ENCODE measurements at regions of chr12 and their contacts with region 1.

Region 1: DNA sequence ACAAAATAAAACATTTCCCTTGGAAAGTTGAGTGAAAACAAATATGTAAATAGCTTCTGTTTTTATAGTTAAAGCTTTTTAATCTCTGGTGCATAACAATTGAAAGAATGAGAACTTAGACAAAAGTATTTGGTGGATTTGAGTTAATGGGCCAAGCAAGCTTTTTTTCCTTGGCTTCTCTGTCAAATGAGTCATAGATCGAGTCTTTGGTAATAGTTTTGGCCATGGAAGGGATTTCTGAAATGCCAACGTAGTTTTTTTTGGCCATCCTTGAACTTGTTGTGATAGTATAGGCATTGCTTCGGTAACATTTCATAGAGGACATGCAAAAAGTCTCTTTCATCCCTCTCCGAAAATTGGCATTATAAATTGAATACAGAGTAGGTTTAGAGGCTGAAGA is 34.9 kb downstream of the GPR19 start:
- DNase-seq: peak; percentile 78
- H3K4me3 ChIP-seq: no peak overlapping the region
- CTCF ChIP-seq: no peak

Region 2: DNA sequence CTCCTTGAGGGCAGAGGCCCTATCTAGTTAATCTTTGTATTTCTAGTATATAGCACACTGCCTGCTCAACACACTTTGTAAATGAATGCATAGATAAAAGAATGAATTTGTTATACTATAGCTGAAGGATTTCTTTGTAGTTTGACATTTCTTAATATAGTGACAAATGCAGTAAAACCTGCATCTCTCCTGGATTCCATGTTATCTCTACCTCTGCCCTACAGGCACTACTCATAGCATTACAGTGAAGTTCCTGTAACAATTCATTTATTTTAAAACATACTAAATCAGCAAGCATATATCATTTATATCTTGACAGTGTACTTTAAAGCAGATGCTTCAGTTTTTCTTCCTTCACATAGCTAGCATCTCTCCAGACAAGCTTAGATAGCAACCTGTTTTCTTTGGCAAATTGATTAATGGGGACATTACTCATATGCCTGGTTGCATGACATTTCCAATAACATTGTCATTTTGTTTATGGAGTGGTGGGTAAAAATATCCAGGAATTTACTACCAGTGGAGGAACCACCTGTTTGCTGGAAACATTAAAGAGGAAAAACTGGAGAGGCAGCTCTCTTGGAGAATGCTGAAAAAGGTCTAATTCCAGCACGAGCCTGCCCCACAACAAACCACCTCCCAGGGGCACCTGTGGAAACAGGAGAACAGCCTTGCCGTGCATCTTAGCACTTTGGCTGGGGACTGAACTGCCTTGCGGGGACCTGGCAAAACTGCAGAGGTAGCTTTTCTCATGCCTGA is 61.4 kb before region 1 on chr12:
- in situ Hi-C with region 1: loop called (anchors 5 kb)
- DNase-seq: no peak
- H3K4me3 ChIP-seq: no peak overlapping the region
- CTCF ChIP-seq: no peak

Region 3: GRCh38 chr12:12704593-12705230 is 43.6 kb after region 1 on chr12:
- in situ Hi-C with region 1: loop called (anchors 5 kb)
- DNase-seq: peak; percentile 91
- H3K4me3 ChIP-seq: no peak overlapping the region
- CTCF ChIP-seq: peak; percentile 99

Region 4: DNA sequence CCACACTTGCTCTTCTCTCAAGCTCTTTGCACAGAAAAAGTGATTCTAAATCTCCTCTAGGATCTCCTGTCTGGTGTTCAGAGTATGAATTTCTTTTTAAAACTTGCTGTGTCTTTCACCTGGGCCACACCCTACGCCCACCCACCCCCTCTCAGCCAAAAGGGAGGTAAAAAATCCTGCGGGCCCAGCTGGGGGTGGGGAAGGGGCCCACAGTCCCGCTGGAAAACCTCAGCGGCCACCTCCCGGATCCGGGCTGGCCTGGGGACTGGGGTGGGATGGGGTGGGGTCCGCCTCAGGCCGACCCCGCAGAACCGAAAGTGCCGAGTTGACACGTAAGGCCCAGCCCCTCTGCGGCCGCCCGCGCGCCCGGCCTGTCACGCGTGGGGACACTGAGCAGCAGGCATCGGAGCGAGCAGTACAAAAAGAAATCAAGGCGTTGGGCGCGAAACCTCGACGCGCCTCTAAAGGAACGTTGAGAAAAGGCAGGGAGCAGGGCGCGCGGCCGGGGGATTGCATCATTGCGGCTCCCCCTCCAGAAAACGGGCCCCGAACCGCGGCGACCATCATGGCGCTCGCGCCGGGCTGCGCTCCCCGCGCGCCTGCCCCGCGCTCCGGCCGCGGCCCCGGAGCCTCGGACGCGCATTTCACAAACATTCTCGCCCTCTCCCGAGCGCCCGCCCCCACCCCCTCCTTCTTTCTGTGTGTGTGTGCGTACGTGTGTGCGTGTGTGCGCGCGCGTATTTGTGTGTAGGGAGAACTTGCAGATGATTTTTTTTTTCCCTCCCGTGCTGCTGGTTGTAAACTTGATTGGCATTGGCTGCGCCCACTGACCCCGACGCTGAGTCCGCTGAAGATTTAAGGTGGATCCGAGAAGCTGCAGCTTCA is 63.8 kb after region 1 on chr12:
- in situ Hi-C with region 1: no loop called
- DNase-seq: peak; percentile 98
- H3K4me3 ChIP-seq: peak overlapping the region; percentile 66
- CTCF ChIP-seq: no peak

Measured in astrocyte of the cerebellum (primary cell).